Right ventricle myocardium superior (tissue), 1 donor: ENCODE measurements at regions of chr6 and their contacts with region 1.

Region 1: GRCh38 chr6:106608062-106608668 is 21.1 kb downstream of the RTN4IP1 start:
- DNase-seq: no peak
- ATAC-seq: peak; percentile 57

Region 2: DNA sequence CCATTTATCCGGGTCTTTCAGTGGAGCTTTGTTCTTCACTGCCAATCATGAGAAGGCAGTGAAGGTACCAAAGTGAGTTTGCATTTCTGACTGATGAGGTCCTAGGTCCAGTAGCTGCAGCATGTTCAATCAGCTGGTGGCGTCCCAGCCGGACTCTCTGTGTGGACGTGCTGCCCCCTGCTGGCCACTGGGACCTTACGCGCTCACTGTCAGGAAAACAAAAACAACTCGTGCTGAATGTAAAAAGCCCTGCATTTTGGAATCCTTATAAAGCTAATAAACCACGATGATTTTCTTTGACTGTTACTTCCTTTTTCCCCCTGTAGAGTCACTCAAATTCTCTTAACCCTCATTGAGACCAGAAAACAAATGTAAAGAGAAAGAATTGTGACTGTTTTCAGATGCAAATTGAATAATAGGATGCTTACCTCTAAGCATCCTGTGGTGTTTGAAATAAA is 371.3 kb after region 1 on chr6:
- intact Hi-C with region 1: loop called (anchors 5 kb)
- DNase-seq: peak; percentile 89
- ATAC-seq: peak; percentile 91